Right ventricle myocardium superior (tissue), 1 donor: ENCODE measurements at regions of chr3 and their contacts with region 1.

Region 1: GRCh38 chr3:122942937-122943827 is 84.4 kb downstream of the SEMA5B start:
- DNase-seq: peak; percentile 80
- ATAC-seq: peak; percentile 93

Region 2: GRCh38 chr3:122982216-122983185 is 39.3 kb after region 1 on chr3:
- intact Hi-C with region 1: loop called (anchors 5 kb)
- DNase-seq: peak; percentile 58
- ATAC-seq: peak; percentile 31

Region 3: GRCh38 chr3:123028233-123028828 is 85.1 kb after region 1 on chr3:
- intact Hi-C with region 1: loop called (anchors 5 kb)
- DNase-seq: no peak
- ATAC-seq: peak; percentile 68

Region 4: GRCh38 chr3:123053106-123053505 is 109.9 kb after region 1 on chr3:
- intact Hi-C with region 1: no loop called
- DNase-seq: no peak
- ATAC-seq: peak; percentile 59

Region 5: GRCh38 chr3:123258811-123259420 is 315.7 kb after region 1 on chr3:
- intact Hi-C with region 1: loop called (anchors 10 kb)
- DNase-seq: no peak
- ATAC-seq: peak; percentile 80